Activated CD4-positive, alpha-beta memory T cell treated with anti-CD3 and anti-CD28 coated beads for 36 hours (primary cell): ENCODE measurements at regions of chr7 and their contacts with region 1.

Region 1: DNA sequence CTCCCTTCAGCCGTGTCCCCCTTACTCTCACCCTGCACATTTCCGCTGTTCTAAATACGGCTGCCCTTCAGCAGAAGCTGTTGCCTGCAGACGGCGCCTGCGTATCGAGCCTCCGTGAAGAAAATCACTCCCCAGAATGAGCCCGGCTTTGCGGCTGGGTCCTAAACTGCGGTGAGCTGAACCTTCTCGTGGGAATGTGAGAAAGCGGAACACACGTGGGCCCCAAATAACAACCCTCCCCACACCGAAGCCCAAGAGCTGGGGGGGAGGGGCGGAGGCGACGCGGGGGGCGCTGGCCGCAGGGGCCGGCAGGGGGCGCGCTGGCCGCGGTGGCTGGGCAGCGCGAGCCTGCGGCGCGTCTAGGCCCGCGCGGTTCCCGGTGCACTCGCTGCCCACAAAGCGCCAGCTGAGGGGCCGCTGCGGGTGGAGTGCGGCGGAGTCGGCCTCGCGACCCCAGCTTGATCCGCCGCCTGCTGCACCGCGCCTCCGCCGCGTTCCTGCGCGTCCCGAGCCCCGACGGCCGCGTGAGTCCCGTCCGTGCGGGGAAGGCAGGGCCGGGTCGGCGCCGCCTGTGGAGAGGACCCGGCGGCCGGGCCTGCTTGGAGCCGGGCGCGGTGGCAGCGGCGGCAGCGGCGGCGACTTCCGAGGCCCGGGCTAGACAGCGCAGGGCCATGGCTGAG is at the start of gene ZNF398:
- DNase-seq: peak; percentile 86
- H3K4me3 Mint-ChIP-seq: peak within 1 kb of the TSS; percentile 79
- H3K27ac Mint-ChIP-seq: peak within 1 kb of the TSS; percentile 87
- H3K4me1 Mint-ChIP-seq: peaks cover 31% of the 10 kb centered on the region
- H3K27me3 Mint-ChIP-seq: no peaks in the 10 kb centered on the region
- total RNA-seq, gene ZNF398: 8.4 to 9.4 TPM

Region 2: DNA sequence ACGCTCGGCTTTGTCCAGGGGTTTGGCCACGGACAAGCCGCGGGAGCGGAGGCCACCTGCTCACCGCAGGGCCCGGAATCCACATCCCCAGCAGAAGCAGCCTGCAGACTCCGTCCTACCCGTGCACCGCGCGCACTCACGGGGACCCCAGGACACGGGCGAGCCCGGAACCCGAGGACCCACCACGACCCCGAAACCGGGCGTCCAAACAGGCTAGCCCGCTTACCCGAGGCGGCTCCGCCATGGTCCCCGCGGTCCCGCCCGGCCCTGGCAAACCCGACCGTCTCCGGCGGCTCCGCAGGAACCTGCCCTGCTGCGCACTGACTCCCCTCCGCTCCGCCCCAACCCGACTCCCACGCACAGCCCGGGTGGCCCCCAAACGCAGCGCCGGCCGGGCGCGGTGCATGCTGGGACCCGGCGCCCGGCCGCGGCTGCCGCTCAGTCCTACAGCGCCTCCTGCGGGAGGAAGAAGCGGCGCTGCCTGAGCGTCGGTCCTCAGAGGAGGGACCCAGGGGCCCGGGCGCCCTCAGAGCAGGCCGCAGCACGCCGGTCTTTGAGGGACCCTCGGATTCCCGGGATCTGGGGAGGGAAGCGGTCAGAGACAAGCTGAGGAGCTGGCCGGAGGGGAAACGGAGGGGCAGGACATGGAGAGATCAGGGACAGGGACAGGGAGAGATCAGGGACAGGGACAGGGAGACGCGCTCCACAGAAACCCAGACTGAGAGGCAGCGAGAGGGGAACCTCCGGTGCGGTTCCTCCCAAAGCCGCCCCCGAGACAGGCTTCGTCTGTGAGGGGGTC is 56.6 kb before region 1 on chr7 and contains the start of gene ZNF786:
- CTCF ChIA-PET with region 1: no interaction called
- POLR2A ChIA-PET with region 1: no interaction called
- intact Hi-C with region 1: loop called (anchors 2 kb)
- DNase-seq: peak; percentile 96
- H3K4me3 Mint-ChIP-seq: peak within 1 kb of the TSS; percentile 96
- H3K27ac Mint-ChIP-seq: peak within 1 kb of the TSS; percentile 99
- H3K4me1 Mint-ChIP-seq: peaks cover 21% of the 10 kb centered on the region
- H3K27me3 Mint-ChIP-seq: no peaks in the 10 kb centered on the region
- total RNA-seq, gene ZNF786: 4.5 to 6.1 TPM

Region 3: DNA sequence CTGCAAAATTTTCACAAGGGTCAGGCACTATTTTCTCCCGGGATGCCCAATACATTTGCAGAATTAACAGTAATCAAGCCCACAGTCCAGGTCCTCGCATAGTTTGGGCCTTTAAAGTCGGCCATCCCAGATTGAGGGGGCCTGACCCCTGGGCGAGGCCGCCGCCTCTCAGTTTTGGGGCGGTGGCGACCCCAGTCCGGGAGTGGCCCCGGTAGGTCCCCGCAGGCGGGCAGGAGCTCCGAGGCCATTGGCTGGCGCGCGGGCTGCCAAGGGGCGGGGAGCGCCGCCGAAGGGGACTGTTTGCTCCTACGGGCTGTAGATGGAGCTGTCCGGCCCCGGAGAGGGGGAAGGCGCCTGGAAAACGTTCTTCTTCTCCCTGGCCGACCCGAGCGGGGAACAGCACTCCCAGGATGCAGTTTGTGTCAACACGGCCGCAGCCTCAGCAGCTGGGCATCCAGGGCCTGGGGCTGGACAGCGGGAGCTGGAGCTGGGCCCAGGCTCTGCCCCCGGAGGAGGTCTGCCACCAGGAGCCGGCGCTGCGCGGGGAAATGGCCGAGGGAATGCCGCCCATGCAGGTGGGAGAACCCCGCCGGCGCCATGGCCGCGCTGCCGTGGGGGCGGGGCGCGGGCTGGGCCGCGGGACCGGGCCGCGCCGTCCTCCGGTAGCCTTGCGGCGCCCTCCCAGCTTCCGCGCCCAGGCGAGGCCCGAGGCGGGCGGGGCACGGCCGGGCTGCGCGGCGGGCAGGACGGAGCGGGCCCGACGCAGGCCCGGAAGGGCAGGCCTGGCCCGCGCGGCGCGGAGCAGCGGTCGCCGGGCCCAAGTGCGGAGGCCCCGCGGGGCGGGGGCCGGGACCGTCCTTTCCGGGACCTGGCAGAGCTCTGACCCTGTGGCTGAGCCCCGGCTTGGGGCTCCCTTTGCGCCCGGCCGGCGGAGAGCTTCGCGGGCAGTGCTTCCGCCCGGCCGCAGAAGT is 48.3 kb after region 1 on chr7 and contains the start of gene ZNF282:
- CTCF ChIA-PET with region 1: interaction called, 18 read pairs
- POLR2A ChIA-PET with region 1: interaction called, 12 read pairs
- intact Hi-C with region 1: no loop called
- DNase-seq: peak; percentile 89
- H3K4me3 Mint-ChIP-seq: peak within 1 kb of the TSS; percentile 92
- H3K27ac Mint-ChIP-seq: peak within 1 kb of the TSS; percentile 93
- H3K4me1 Mint-ChIP-seq: peaks cover 51% of the 10 kb centered on the region
- H3K27me3 Mint-ChIP-seq: no peaks in the 10 kb centered on the region
- total RNA-seq, gene ZNF282: 61.7 to 61.9 TPM

Region 4: DNA sequence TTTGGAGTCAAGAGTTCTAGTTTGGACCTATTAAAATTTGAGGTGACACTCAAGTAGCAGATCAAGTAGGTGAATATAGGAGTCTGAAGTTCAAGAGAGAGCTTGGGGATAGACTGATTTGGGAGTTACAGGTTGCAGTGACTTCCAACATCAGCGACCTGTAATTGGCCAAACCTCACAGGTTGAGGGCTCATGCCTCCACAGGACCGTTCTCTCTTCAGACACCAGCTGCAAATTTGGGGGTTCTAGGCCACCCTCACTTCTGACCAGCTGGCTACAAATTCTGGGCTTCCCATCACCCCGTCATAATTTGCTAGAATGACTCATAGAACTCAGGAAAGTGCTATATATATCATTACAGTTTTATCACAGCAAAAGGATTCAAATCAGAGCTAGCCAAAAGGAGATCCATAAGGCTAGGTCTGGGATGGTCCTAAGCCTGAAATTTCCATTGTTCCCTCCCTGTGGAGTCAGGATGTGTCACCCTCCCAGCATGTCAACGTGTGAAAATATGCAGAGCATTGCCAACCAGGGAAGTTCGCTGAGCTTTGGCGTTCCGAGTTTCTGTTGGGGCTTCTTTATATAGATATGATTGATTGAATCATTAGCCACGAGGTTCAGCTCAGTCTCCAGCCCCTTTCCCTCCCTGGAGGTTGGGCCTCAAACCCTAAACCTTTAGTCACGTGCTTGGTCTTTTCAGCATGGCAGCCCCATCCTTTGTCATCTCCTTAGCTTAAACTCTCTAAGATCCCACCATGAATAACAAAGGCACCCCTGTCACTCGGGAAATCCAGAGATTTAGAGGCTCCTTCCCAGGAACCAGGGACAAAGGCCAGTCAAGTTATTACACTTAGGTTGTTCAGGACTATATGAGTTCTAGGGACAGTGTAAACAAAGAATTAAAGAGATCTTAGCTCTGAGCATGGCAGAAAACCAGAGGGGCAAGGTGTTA is 71.5 kb after region 1 on chr7:
- CTCF ChIA-PET with region 1: no interaction called
- POLR2A ChIA-PET with region 1: no interaction called
- intact Hi-C with region 1: no loop called
- DNase-seq: no peak
- H3K4me3 Mint-ChIP-seq: no peak overlapping the region
- H3K27ac Mint-ChIP-seq: peak overlapping the region; percentile 25
- H3K4me1 Mint-ChIP-seq: peaks cover 3% of the 10 kb centered on the region
- H3K27me3 Mint-ChIP-seq: no peaks in the 10 kb centered on the region

Region 5: GRCh38 chr7:149245244-149245643 is 98.0 kb after region 1 on chr7:
- CTCF ChIA-PET with region 1: interaction called, 6 read pairs
- POLR2A ChIA-PET with region 1: no interaction called
- intact Hi-C with region 1: loop called (anchors 5 kb)
- DNase-seq: peak; percentile 82
- H3K4me3 Mint-ChIP-seq: peak overlapping the region; percentile 43
- H3K27ac Mint-ChIP-seq: peak overlapping the region; percentile 91
- H3K4me1 Mint-ChIP-seq: peaks cover 66% of the 10 kb centered on the region
- H3K27me3 Mint-ChIP-seq: no peaks in the 10 kb centered on the region

Region 6: GRCh38 chr7:149422129-149422913 is 275.1 kb after region 1 on chr7:
- CTCF ChIA-PET with region 1: interaction called, 9 read pairs
- POLR2A ChIA-PET with region 1: interaction called, 3 read pairs
- intact Hi-C with region 1: loop called (anchors 5 kb)
- DNase-seq: peak; percentile 80
- H3K4me3 Mint-ChIP-seq: peak overlapping the region; percentile 72
- H3K27ac Mint-ChIP-seq: peak overlapping the region; percentile 51
- H3K4me1 Mint-ChIP-seq: peaks cover 9% of the 10 kb centered on the region
- H3K27me3 Mint-ChIP-seq: no peaks in the 10 kb centered on the region